Left ventricle myocardium superior (tissue), 1 donor: ENCODE measurements at regions of chr2 and their contacts with region 1.

Region 1: GRCh38 chr2:231411831-231412617 is 16.5 kb downstream of the B3GNT7 start:
- DNase-seq: peak; percentile 91
- ATAC-seq: peak; percentile 99

Region 2: GRCh38 chr2:231227309-231228162 is 184.5 kb before region 1 on chr2:
- intact Hi-C with region 1: loop called (anchors 5 kb)
- DNase-seq: no peak
- ATAC-seq: peak; percentile 97